WTC11 (cell line): ENCODE measurements at regions of chr4 and their contacts with region 1.

Region 1: DNA sequence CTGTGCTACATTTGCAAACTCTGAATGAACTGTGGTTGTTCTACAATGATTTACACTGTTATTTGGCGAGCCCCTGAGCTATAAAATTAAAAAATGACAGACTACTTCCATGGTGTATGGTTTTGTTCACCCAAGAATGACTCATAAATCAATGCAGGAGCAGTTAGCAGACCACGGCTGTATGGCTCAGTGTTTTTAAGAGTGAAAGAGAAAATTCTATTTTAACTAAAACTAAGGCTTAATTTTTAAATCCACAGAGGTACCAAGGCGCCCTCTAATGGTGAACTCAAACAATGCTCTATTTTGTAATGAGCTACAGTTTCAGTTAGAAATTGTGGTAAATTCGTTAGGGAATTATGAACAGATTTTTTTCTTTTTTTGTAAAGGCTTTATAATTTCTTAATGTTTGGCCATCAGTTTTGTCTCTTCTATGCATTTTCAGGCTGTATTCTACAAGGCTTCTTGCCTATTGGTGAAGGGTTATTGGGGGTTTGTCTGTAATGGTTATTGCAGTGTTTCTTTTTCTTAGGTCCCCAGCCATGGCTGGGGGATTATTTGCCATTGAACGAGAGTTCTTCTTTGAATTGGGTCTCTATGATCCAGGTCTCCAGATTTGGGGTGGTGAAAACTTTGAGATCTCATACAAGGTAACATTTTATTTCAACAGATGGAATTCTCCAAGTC is 32.5 kb downstream of the HMGB2 start:
- DNase-seq: no peak
- ATAC-seq: no peak
- H3K4me3 Mint-ChIP-seq: no peak overlapping the region
- H3K27ac Mint-ChIP-seq: no peak overlapping the region
- H3K4me1 Mint-ChIP-seq: peaks cover 10% of the 10 kb centered on the region
- H3K27me3 Mint-ChIP-seq: no peaks in the 10 kb centered on the region
- CTCF ChIP-seq: peak; percentile 64

Region 2: GRCh38 chr4:172892300-172892699 is 409.4 kb before region 1 on chr4:
- CTCF ChIA-PET with region 1: interaction called, 16 read pairs
- POLR2A ChIA-PET with region 1: no interaction called
- DNase-seq: peak; percentile 31
- ATAC-seq: peak; percentile 84
- H3K4me3 Mint-ChIP-seq: no peak overlapping the region
- H3K27ac Mint-ChIP-seq: no peak overlapping the region
- H3K4me1 Mint-ChIP-seq: no peaks in the 10 kb centered on the region; the same call in 1 of the 2 replicates
- H3K27me3 Mint-ChIP-seq: no peaks in the 10 kb centered on the region
- CTCF ChIP-seq: peak; percentile 87

Region 3: DNA sequence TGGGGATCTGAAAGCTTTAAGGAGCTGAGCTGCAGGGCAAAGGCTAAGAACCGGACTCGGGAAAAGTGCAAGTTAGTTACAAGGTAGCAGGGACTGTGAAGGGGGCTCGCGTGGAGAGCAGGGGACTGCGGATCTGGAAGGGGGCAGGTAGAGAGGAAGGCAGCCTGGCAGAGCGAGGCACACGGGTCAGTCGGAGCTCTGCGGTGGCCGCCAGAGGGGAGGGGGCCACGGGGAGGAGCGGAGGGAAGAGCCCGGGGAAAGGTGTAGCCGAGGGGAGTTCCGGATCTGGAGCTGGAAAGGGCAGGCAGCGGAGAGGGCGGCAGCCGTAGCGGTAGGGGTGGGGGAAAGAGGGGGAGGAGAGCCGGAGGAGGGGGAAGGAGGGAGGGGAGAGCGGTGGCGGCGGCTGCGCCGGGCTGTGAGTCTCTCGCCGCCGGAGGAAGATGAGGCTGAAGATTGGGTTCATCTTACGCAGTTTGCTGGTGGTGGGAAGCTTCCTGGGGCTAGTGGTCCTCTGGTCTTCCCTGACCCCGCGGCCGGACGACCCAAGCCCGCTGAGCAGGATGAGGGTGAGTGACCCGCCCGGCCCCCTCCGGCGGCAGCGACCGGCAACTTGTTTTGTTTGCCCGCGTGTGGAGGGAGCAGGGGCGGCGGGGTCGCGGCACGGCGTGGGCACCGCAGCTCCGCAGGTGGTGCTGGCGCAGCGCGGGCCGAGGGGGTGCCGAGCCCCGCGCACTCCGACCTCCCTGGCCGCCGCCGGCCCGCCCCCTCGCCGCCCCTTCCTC is 133.1 kb before region 1 on chr4 and contains the start of gene GALNT7:
- CTCF ChIA-PET with region 1: interaction called, 25 read pairs
- POLR2A ChIA-PET with region 1: interaction called, 3 read pairs
- DNase-seq: peak; percentile 87
- ATAC-seq: peak; percentile 81
- H3K4me3 Mint-ChIP-seq: peak within 1 kb of the TSS; percentile 88
- H3K27ac Mint-ChIP-seq: peak within 1 kb of the TSS; percentile 98
- H3K4me1 Mint-ChIP-seq: peaks cover 50% of the 10 kb centered on the region
- H3K27me3 Mint-ChIP-seq: no peaks in the 10 kb centered on the region
- CTCF ChIP-seq: no peak
- total RNA-seq, gene GALNT7: 79.9 to 86.9 TPM (median 82.8 TPM) in 3 replicates

Region 4: DNA sequence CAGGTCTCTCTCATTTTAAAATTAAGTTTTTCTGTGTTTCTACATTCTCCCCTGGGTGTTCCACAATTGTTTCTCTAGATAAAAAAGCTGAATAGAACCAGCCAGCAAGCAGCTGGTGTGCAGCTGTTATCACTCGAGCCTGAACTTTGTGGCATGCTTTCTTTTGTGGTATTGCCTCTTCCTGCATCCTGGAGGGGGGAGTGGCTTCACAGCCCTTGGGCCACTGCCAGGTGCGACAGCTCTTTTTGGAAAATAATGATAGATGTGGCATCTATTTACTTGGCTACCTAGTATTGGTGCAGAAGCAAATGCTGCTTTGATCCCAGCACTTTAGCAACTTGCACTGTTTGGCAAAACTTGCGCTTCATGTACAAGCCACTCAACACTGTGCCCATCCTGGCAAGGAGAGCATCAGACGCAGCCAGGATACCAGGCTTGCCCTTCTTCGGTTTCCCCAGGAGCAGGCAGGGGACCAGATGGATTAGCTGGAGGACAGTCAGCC is 36.9 kb before region 1 on chr4:
- CTCF ChIA-PET with region 1: interaction called, 24 read pairs
- POLR2A ChIA-PET with region 1: no interaction called
- DNase-seq: no peak
- ATAC-seq: peak; percentile 68
- H3K4me3 Mint-ChIP-seq: no peak overlapping the region
- H3K27ac Mint-ChIP-seq: peak overlapping the region; percentile 36; the same call in 1 of the 2 replicates
- H3K4me1 Mint-ChIP-seq: peaks cover 38% of the 10 kb centered on the region
- H3K27me3 Mint-ChIP-seq: no peaks in the 10 kb centered on the region
- CTCF ChIP-seq: no peak

Region 5: GRCh38 chr4:173318648-173319211 is 17.1 kb after region 1 on chr4:
- CTCF ChIA-PET with region 1: interaction called, 42 read pairs
- POLR2A ChIA-PET with region 1: no interaction called
- DNase-seq: no peak
- ATAC-seq: no peak
- H3K4me3 Mint-ChIP-seq: no peak overlapping the region
- H3K27ac Mint-ChIP-seq: no peak overlapping the region
- H3K4me1 Mint-ChIP-seq: peaks cover 17% of the 10 kb centered on the region
- H3K27me3 Mint-ChIP-seq: no peaks in the 10 kb centered on the region
- CTCF ChIP-seq: no peak

Region 6: GRCh38 chr4:173380987-173381386 is 79.3 kb after region 1 on chr4:
- CTCF ChIA-PET with region 1: interaction called, 10 read pairs
- POLR2A ChIA-PET with region 1: no interaction called
- DNase-seq: no peak
- ATAC-seq: no peak
- H3K4me3 Mint-ChIP-seq: no peak overlapping the region
- H3K27ac Mint-ChIP-seq: no peak overlapping the region
- H3K4me1 Mint-ChIP-seq: peaks cover 27% of the 10 kb centered on the region
- H3K27me3 Mint-ChIP-seq: no peaks in the 10 kb centered on the region
- CTCF ChIP-seq: no peak